Right ventricle myocardium inferior (tissue), 1 donor: ENCODE measurements at regions of chr16 and their contacts with region 1.

Region 1: DNA sequence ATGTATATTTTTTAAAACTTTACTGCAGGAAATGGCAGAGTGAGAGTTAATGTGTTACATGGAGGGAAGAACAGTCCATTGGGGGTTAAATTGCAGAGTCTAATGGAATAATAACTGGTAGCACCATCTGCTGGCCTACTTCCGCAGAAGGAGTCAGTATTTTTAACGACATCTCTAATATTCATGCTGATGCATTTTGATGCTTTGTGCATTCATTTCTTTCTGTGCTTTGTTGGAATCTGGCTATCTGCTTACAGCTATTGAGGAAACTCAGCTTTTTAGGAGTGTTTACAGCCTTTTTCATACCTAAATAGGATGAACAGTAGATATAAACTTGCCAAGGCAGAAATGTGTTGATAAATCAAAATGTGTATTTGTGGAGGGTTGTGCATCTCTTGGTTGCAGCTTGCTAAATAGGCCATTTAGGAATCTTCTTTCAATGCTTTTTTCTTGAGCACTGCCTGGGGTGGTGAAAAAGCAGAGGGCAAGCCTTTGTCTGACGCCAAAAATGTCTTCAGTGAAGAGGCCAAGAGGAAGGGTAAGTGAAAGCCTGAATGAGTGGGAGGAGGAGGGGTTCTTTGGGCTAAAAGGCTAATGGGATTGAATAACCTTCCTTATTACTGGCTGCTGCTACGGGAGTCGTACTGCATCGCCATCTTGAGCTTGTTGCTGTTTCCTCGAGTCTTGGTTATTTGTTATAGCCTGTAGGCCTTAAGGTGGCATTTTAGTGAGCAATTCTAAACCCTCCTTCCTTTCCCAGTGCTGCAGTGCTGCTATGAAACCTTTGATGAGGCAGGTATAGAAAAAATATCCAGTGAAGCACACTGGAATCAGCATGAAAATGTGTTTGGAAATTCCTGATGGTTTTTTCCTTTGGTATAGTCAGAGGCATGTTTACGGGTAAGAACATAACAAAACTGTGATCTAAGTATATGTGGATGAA is 153.3 kb downstream of the CHD9 start:
- DNase-seq: no peak
- ATAC-seq: peak; percentile 95

Region 2: DNA sequence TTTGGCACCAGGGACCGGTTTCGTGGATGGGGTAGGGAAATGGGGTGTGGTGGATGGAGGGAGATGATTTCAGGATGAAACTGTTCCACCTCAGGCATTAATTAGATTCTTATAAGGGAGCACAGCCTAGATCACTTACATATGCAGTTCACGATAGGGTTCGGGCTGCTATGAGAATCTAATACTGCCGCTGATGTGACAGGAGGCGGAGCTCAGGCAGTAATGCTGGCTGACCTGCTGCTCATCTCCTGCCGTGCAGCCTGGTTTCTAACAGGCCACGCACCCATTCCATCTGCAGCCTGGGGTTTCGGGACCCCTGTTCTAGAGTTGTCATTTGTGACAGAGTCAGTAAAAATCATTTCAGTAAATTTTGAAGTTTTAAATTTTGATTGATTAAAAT is 53.6 kb before region 1 on chr16:
- intact Hi-C with region 1: loop called (anchors 5 kb)
- DNase-seq: no peak
- ATAC-seq: no peak